Activated CD8-positive, alpha-beta memory T cell treated with anti-CD3 and anti-CD28 coated beads, Interleukin-2, amount 10 ng/mL, durations not matched to agents 7 days and 5 days (primary cell): ENCODE measurements at regions of chr11 and their contacts with region 1.

Region 1: GRCh38 chr11:120303004-120303637 is 22.0 kb upstream of the TLCD5 start:
- DNase-seq: peak; percentile 81
- ATAC-seq: peak; percentile 95
- H3K4me3 Mint-ChIP-seq: no peak overlapping the region
- H3K27ac Mint-ChIP-seq: no peak overlapping the region
- H3K4me1 Mint-ChIP-seq: peaks cover 9% of the 10 kb centered on the region
- H3K27me3 Mint-ChIP-seq: peaks cover 54% of the 10 kb centered on the region

Region 2: DNA sequence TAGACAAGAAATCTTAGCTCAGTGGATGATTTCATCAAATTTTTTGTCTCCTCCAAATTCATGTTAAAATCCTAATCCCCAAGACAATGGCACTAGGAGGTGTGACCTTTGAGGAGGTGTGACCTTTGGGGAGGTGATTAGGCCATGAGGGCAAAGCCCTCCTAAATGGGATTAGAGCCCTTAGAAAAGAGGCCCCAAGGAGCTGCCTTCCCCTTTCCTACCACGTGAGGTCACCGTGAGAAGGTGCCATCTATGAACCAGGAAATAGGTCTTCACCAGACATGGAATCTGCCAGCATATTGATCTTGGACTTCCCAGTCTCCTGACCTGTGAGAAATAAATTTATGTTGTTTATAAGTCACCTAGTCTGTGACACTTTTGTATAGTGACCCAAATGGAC is 303.9 kb before region 1 on chr11:
- CTCF ChIA-PET with region 1: no interaction called
- DNase-seq: no peak
- ATAC-seq: no peak
- H3K4me3 Mint-ChIP-seq: no peak overlapping the region
- H3K27ac Mint-ChIP-seq: no peak overlapping the region
- H3K4me1 Mint-ChIP-seq: no peaks in the 10 kb centered on the region
- H3K27me3 Mint-ChIP-seq: peaks cover 33% of the 10 kb centered on the region

Region 3: DNA sequence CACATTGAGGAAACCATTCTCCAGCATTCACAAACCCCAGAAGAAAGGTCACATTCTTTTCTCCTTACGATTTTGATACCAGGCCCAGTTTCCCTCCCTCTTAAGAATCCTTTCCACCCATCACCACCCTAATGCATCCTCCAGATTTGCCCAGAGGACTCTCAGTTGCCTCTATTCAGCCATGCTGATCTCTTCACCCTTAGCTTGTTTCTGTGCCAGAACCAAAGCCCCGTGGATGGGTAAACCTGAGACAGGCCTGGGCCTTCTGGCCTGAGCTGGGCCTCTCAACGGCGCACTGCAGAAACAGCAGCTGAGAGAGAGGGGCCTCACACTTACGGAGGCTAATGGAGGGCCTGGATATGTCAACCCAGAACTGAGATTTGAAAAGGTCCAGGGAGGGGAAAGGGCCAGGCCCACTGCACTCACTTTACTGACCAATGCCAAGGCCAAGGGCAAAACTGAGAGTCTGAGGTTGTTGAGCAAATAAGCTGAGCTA is 124.5 kb before region 1 on chr11:
- CTCF ChIA-PET with region 1: interaction called, 33 read pairs
- DNase-seq: peak; percentile 27
- ATAC-seq: no peak
- H3K4me3 Mint-ChIP-seq: no peak overlapping the region
- H3K27ac Mint-ChIP-seq: no peak overlapping the region
- H3K4me1 Mint-ChIP-seq: no peaks in the 10 kb centered on the region
- H3K27me3 Mint-ChIP-seq: peaks cover 35% of the 10 kb centered on the region

Region 4: GRCh38 chr11:120229451-120230424 is 73.4 kb before region 1 on chr11:
- CTCF ChIA-PET with region 1: interaction called, 475 read pairs
- DNase-seq: peak; percentile 50
- ATAC-seq: peak; percentile 50
- H3K4me3 Mint-ChIP-seq: no peak overlapping the region
- H3K27ac Mint-ChIP-seq: no peak overlapping the region
- H3K4me1 Mint-ChIP-seq: peaks cover 6% of the 10 kb centered on the region
- H3K27me3 Mint-ChIP-seq: peaks cover 30% of the 10 kb centered on the region

Region 5: GRCh38 chr11:120248551-120249278 is 54.4 kb before region 1 on chr11:
- CTCF ChIA-PET with region 1: interaction called, 161 read pairs
- DNase-seq: peak; percentile 47
- ATAC-seq: peak; percentile 87
- H3K4me3 Mint-ChIP-seq: peak overlapping the region; percentile 59
- H3K27ac Mint-ChIP-seq: peak overlapping the region; percentile 78
- H3K4me1 Mint-ChIP-seq: peaks cover 64% of the 10 kb centered on the region
- H3K27me3 Mint-ChIP-seq: peaks cover 67% of the 10 kb centered on the region

Region 6: DNA sequence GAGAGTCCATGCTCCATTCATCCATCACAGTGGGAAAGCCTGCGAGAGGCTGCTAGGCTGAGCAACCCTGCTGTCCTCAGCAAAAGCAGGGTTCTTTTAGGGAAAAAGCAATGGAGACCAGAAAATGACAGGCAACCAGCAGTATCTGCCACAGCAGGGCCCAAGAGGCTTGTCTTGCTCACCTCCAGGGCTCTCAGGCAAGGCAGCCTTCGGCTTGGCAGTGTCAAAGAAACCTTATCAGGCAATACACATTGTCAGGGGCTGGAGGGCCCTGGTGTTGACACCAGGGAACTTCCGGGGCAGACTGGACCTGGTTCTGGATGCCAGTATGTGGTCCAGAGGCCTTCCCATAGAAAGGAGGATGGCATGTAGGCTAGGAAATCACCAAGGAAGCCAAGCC is 11.7 kb after region 1 on chr11:
- CTCF ChIA-PET with region 1: interaction called, 14 read pairs
- DNase-seq: no peak
- ATAC-seq: no peak
- H3K4me3 Mint-ChIP-seq: no peak overlapping the region
- H3K27ac Mint-ChIP-seq: no peak overlapping the region
- H3K4me1 Mint-ChIP-seq: no peaks in the 10 kb centered on the region
- H3K27me3 Mint-ChIP-seq: peaks cover 20% of the 10 kb centered on the region